Activated B cell treated with CpG ODN at 0.5 μM for 24 hours (primary cell): ENCODE measurements at regions of chr10 and their contacts with region 1.

Region 1: GRCh38 chr10:47340608-47341170 is 7.5 kb upstream of the RBP3 start:
- DNase-seq: peak; percentile 54
- ATAC-seq: peak; percentile 47
- H3K4me3 Mint-ChIP-seq: no peak overlapping the region
- H3K27ac Mint-ChIP-seq: no peak overlapping the region
- H3K4me1 Mint-ChIP-seq: peaks cover 6% of the 10 kb centered on the region
- H3K27me3 Mint-ChIP-seq: peaks cover 15% of the 10 kb centered on the region
- CTCF ChIP-seq: peak; percentile 98

Region 2: DNA sequence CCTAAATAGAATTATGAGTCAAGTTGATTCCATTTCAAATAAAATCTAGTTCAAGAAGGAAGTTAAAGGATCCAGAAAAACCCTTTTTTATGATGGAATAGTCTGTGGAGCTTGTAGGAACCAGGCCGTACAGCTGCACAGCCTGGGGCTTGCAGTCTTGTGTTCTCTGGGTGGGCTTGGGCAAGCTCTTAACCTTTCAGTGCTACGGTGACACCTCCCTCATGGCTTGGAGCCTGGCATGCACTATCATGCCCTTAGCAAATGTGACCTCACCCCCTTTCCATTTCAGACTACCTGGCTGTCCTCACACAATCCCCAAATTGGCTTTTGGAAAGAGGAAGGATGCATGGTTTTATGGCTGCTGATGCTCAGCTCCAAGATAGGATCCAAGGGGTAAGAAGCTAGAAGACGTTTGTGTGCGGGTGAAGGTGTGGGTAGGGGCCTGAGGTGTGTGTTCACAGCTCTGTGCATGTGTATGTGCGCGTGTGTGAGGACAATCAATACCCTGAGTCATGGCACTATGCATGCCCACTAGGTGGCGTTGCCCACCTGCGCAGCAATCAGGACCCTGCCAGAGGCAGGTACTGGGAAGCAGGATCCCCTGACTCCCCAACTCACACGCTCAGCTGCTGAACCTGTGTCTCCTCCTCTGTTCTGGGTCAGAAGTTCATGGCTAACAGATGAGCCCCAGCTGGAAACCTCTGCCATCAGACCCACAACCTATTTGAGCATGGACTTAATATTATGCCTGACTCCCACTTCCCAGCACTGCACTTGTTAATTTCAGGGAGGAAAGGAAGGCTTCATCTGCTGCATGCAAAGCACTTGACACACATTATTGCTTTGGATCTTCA is 316.1 kb before region 1 on chr10:
- CTCF ChIA-PET with region 1: interaction called, 4 read pairs
- POLR2A ChIA-PET with region 1: no interaction called
- intact Hi-C with region 1: loop called (anchors 1 kb)
- DNase-seq: peak; percentile 32
- ATAC-seq: peak; percentile 49
- H3K4me3 Mint-ChIP-seq: no peak overlapping the region
- H3K27ac Mint-ChIP-seq: no peak overlapping the region
- H3K4me1 Mint-ChIP-seq: no peaks in the 10 kb centered on the region
- H3K27me3 Mint-ChIP-seq: no peaks in the 10 kb centered on the region
- CTCF ChIP-seq: no peak

Region 3: DNA sequence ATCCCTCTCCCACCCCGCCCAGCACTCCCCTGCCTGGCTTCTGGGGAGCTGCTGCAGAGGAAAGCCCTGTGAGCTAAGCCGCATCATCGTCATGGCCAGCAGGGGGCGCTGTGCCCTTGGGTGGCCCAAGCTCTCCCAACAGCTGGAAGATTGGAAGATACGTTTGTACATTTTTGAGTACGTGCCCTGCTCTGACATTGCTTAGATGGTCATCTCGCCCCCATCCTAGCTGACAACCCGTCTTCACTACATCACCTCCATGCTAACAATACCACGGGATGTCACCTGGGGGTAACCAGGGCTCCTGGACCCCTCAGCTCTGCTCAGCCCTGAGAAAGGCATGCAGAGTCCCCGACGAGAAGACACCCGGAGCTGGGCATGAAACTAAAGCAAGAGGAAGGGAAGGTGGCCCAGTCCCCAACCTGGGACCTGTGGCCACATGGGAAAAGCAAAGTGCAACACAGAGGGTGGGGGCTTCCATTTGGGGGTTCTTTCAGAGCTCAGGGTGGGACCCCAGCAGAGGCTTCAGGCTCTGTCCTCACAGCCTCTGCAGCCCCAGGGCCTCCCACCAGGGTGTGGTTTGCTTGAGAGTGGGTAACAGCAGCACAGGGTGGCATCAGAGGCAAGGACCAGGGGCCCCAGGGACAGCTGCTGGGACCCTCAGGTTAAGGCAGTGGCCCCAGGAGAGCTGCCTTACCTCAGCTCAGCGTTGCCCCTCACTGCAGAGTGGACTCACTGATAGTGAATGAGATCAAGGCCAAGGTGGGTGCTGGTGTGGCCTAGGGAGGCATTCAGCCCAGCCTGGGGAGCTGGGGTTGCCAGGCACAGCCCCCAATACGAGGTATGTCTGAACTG is 292.8 kb before region 1 on chr10:
- CTCF ChIA-PET with region 1: interaction called, 4 read pairs
- POLR2A ChIA-PET with region 1: no interaction called
- intact Hi-C with region 1: loop called (anchors 1 kb)
- DNase-seq: peak; percentile 41
- ATAC-seq: no peak
- H3K4me3 Mint-ChIP-seq: no peak overlapping the region
- H3K27ac Mint-ChIP-seq: no peak overlapping the region
- H3K4me1 Mint-ChIP-seq: no peaks in the 10 kb centered on the region
- H3K27me3 Mint-ChIP-seq: no peaks in the 10 kb centered on the region
- CTCF ChIP-seq: no peak

Region 4: GRCh38 chr10:47079196-47079580 is 261.5 kb before region 1 on chr10:
- CTCF ChIA-PET with region 1: no interaction called
- POLR2A ChIA-PET with region 1: no interaction called
- intact Hi-C with region 1: no loop called
- DNase-seq: no peak
- ATAC-seq: no peak
- H3K4me3 Mint-ChIP-seq: no peak overlapping the region
- H3K27ac Mint-ChIP-seq: no peak overlapping the region
- H3K4me1 Mint-ChIP-seq: no peaks in the 10 kb centered on the region
- H3K27me3 Mint-ChIP-seq: peaks cover 19% of the 10 kb centered on the region
- CTCF ChIP-seq: no peak

Region 5: DNA sequence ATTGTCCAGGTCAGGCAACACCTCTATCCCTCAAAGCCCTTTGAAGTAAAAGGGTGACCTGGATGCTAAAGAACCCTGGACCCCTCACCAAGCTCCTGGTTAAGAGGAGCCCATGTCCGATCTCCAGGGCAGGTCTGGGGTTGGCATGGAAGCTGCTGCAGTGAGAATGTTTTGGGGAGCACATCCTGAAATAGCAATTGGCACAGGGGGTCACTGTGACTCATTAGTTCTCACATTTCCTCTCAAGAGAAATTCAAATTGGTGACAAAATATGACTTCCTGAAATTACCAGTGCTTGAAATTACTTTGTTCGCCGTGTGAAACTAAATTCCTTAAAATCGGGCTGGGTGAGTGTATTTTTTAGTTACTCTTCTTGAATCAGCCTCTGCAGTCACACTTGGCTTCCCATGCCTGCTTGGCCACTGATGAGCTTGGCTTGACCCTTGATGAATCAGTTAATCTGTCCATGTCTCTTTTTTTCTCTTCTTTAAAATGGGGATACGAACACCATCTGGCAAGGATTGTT is 1283.0 kb after region 1 on chr10:
- CTCF ChIA-PET with region 1: no interaction called
- POLR2A ChIA-PET with region 1: no interaction called
- intact Hi-C with region 1: no loop called
- DNase-seq: no peak
- ATAC-seq: no peak
- H3K4me3 Mint-ChIP-seq: no peak overlapping the region
- H3K27ac Mint-ChIP-seq: no peak overlapping the region
- H3K4me1 Mint-ChIP-seq: peaks cover 36% of the 10 kb centered on the region
- H3K27me3 Mint-ChIP-seq: peaks cover 1% of the 10 kb centered on the region
- CTCF ChIP-seq: no peak